Activated CD4-positive, alpha-beta memory T cell treated with anti-CD3 and anti-CD28 coated beads for 36 hours (primary cell): ENCODE measurements at regions of chr12 and their contacts with region 1.

Region 1: DNA sequence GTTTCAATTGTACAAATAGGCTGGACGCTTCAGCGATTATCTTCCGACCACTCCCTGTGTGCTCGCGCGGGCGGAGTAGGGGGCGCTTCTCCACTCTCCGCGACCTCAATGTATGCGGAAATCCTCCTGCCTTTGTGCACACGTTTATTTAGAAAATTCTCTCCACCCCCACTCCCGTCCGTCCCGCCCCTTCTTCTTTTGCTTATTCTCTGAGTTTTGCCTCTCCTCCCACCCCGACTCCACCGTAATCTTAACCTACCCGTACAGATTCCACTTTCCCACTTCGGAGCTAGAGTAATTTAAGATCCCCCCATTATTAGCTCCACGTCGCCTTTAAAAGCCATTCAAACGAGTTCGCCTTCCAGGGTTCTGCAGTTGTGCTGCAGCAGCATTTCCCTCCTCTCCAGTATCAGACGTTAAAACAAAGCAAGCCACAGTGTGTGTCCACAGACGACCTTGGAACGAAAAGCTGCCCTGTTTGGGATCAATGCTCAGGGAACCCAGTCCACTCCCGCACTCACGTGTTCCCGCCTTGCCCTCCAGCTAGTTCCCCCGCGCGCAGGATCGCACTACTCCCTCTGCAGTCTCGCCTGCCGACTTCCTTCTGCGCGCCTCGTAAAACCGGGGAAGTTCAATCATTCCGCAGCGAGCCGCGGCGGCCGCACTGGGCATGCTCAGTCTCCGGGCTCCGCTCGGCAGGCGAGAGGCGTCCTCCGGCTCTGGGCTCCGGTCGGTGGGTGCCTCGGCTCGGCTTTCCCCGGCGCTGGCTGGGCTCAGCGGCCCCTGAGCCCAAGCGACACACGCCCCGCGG is at the start of gene ANO6:
- DNase-seq: peak; percentile 88
- H3K4me3 Mint-ChIP-seq: peak within 1 kb of the TSS; percentile 90
- H3K27ac Mint-ChIP-seq: peak within 1 kb of the TSS; percentile 94
- H3K4me1 Mint-ChIP-seq: peaks cover 48% of the 10 kb centered on the region
- H3K27me3 Mint-ChIP-seq: no peaks in the 10 kb centered on the region
- total RNA-seq, gene ANO6: 19.0 to 21.4 TPM

Region 2: DNA sequence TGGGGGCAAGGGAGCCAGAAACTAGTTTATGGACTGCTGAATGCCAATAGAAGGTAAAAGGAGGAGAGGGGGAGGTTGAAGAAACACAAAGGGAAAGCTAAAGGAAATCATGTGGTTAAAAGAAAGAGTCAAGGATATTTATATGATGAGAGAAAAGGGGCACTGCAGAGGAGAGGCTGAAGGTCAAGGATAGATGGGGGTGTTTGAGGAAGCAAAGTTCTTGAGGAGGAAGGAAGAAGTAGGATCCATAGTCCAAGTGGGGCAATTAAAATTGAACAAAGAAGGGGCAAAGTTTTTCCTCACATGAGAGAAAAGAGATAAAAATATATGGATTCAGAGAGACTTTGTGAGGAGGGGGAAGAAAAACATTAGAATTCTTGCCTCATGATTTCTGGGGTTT is 154.6 kb before region 1 on chr12:
- CTCF ChIA-PET with region 1: no interaction called
- POLR2A ChIA-PET with region 1: no interaction called
- intact Hi-C with region 1: no loop called
- DNase-seq: no peak
- H3K4me3 Mint-ChIP-seq: no peak overlapping the region
- H3K27ac Mint-ChIP-seq: no peak overlapping the region
- H3K4me1 Mint-ChIP-seq: no peaks in the 10 kb centered on the region
- H3K27me3 Mint-ChIP-seq: peaks cover 4% of the 10 kb centered on the region

Region 3: GRCh38 chr12:45192707-45193106 is 22.9 kb before region 1 on chr12:
- CTCF ChIA-PET with region 1: interaction called, 3 read pairs
- POLR2A ChIA-PET with region 1: interaction called, 3 read pairs
- intact Hi-C with region 1: loop called (anchors 1 kb)
- DNase-seq: no peak
- H3K4me3 Mint-ChIP-seq: no peak overlapping the region
- H3K27ac Mint-ChIP-seq: no peak overlapping the region
- H3K4me1 Mint-ChIP-seq: peaks cover 16% of the 10 kb centered on the region
- H3K27me3 Mint-ChIP-seq: no peaks in the 10 kb centered on the region

Region 4: GRCh38 chr12:45205165-45205825 is 10.3 kb before region 1 on chr12:
- CTCF ChIA-PET with region 1: interaction called, 3 read pairs
- POLR2A ChIA-PET with region 1: interaction called, 3 read pairs
- intact Hi-C with region 1: loop called (anchors 1 kb)
- DNase-seq: no peak
- H3K4me3 Mint-ChIP-seq: no peak overlapping the region
- H3K27ac Mint-ChIP-seq: no peak overlapping the region
- H3K4me1 Mint-ChIP-seq: peaks cover 18% of the 10 kb centered on the region
- H3K27me3 Mint-ChIP-seq: no peaks in the 10 kb centered on the region

Region 5: GRCh38 chr12:45601888-45602287 is 386.3 kb after region 1 on chr12:
- CTCF ChIA-PET with region 1: no interaction called
- POLR2A ChIA-PET with region 1: no interaction called
- intact Hi-C with region 1: no loop called
- DNase-seq: no peak
- H3K4me3 Mint-ChIP-seq: no peak overlapping the region
- H3K27ac Mint-ChIP-seq: no peak overlapping the region
- H3K4me1 Mint-ChIP-seq: no peaks in the 10 kb centered on the region
- H3K27me3 Mint-ChIP-seq: peaks cover 1% of the 10 kb centered on the region